ENCODE measurements at regions of chr1 and their contacts with region 1.

Region 1: DNA sequence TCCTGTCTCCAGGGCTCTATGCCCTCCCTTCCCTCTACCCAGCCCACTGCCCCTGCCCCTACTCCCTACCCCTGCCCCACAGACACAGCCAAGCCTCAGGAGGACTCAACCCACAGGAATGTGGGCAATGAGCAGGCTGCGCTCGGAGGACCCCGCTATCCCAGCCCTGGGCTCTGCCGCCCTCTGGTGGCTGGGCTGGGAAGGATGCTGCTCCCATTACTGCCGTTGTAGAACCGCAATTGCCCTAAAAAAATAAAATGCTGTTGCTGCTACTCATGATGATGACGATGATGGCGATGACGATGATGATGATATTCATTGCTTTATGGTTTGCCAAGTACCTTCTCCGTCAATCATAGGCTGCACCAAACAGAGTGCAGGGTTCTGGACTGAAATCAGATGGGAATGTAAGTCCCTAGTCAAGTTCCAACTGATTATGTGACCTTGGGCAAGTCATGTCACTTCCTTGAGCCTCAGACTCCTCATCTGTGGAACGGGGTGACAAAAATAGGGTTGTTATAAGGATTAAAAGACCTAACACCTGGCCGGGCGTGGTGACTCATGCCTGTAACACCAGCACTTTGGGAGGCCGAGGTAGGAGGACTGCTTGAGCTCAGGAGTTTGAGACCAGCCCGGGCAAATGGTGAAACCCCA is 24.6 kb downstream of the ARHGEF19 start:
- DNase-seq: peak in 1 of 2 experiments; percentile 78
- ATAC-seq: peak; percentile 61 to 81
- H3K4me3 ChIP-seq: no peak overlapping the region
- H3K27ac ChIP-seq: peak overlapping the region; percentile 93 to 95
- H3K4me1 ChIP-seq: peaks cover 70% of the 10 kb centered on the region
- CTCF ChIP-seq: peak; percentile 90
- EP300 ChIP-seq: no peak
- POLR2A ChIP-seq: no peak
- RAD21 ChIP-seq: peak; percentile 99

Region 2: GRCh38 chr1:16073490-16074119 is 114.3 kb before region 1 on chr1 and contains the start of gene FAM131C:
- CTCF ChIA-PET with region 1: interaction called, 318 read pairs
- POLR2A ChIA-PET with region 1: interaction called, 7 read pairs
- DNase-seq: peak; percentile 46 to 61
- ATAC-seq: peak; percentile 45 to 53
- H3K4me3 ChIP-seq: peak within 1 kb of the TSS; percentile 90
- H3K27ac ChIP-seq: peak within 1 kb of the TSS; percentile 95 to 100
- H3K4me1 ChIP-seq: peaks cover 54% of the 10 kb centered on the region
- CTCF ChIP-seq: peak; percentile 65
- EP300 ChIP-seq: no peak
- POLR2A ChIP-seq: 0 out of 2 replicates have a peak, but pooled peaks have one; percentile 22
- RAD21 ChIP-seq: no peak; a peak in 2 of 5 replicates
- polyA plus RNA-seq, gene FAM131C: 2.3 and 2.9 TPM in 2 replicates

Region 3: GRCh38 chr1:16139473-16139962 is 48.4 kb before region 1 on chr1:
- CTCF ChIA-PET with region 1: interaction called, 152 read pairs
- POLR2A ChIA-PET with region 1: no interaction called
- DNase-seq: peak in 1 of 2 experiments; percentile 57
- ATAC-seq: peak in 1 of 2 experiments; percentile 1; a peak in 2 of 6 replicates
- H3K4me3 ChIP-seq: peak overlapping the region; percentile 13; the same call in 1 of the 3 replicates
- H3K27ac ChIP-seq: peak overlapping the region; percentile 95 to 100
- H3K4me1 ChIP-seq: peaks cover 67% of the 10 kb centered on the region
- CTCF ChIP-seq: no peak
- EP300 ChIP-seq: 0 out of 5 replicates have a peak, but pooled peaks of 1 of the 2 experiments have one; percentile 15
- POLR2A ChIP-seq: no peak
- RAD21 ChIP-seq: no peak

Region 4: GRCh38 chr1:16198444-16199156 is 10.7 kb after region 1 on chr1:
- CTCF ChIA-PET with region 1: interaction called, 15 read pairs
- POLR2A ChIA-PET with region 1: no interaction called
- DNase-seq: no peak
- ATAC-seq: no peak; a peak in 1 of 6 replicates
- H3K4me3 ChIP-seq: no peak overlapping the region
- H3K27ac ChIP-seq: no peak overlapping the region
- H3K4me1 ChIP-seq: no peaks in the 10 kb centered on the region
- CTCF ChIP-seq: no peak
- EP300 ChIP-seq: no peak
- POLR2A ChIP-seq: no peak
- RAD21 ChIP-seq: no peak

Region 5: GRCh38 chr1:16243936-16244649 is 56.2 kb after region 1 on chr1:
- CTCF ChIA-PET with region 1: interaction called, 26 read pairs
- POLR2A ChIA-PET with region 1: no interaction called
- DNase-seq: peak; percentile 73 to 79
- ATAC-seq: peak; percentile 84 to 87
- H3K4me3 ChIP-seq: no peak overlapping the region
- H3K27ac ChIP-seq: peak overlapping the region in 1 of 2 experiments; percentile 27; a peak in 3 of 6 replicates
- H3K4me1 ChIP-seq: peaks cover 16% of the 10 kb centered on the region; the same call in 2 of the 3 replicates
- CTCF ChIP-seq: peak; percentile 76
- EP300 ChIP-seq: no peak
- POLR2A ChIP-seq: no peak
- RAD21 ChIP-seq: peak; percentile 83 to 90

Measured in A549 (cell line).